T-cell (primary cell): ENCODE measurements at regions of chr2 and their contacts with region 1.

Region 1: GRCh38 chr2:165844216-165844615 is 50.2 kb upstream of the GALNT3 start:
- DNase-seq: no peak
- ATAC-seq: no peak
- H3K4me3 ChIP-seq: no peak overlapping the region
- H3K4me3 Mint-ChIP-seq: no peak overlapping the region
- H3K27ac ChIP-seq: no peak overlapping the region
- H3K27ac Mint-ChIP-seq: no peak overlapping the region
- H3K4me1 ChIP-seq: no peaks in the 10 kb centered on the region
- H3K4me1 Mint-ChIP-seq: no peaks in the 10 kb centered on the region
- H3K27me3 ChIP-seq: no peaks in the 10 kb centered on the region
- H3K27me3 Mint-ChIP-seq: no peaks in the 10 kb centered on the region

Region 2: GRCh38 chr2:165803123-165803760 is 41.0 kb before region 1 on chr2:
- CTCF ChIA-PET with region 1: interaction called in 1 of 2 experiments, 10 read pairs
- POLR2A ChIA-PET with region 1: no interaction called
- DNase-seq: no peak
- ATAC-seq: no peak
- H3K4me3 ChIP-seq: no peak overlapping the region
- H3K4me3 Mint-ChIP-seq: no peak overlapping the region
- H3K27ac ChIP-seq: no peak overlapping the region
- H3K27ac Mint-ChIP-seq: no peak overlapping the region
- H3K4me1 ChIP-seq: no peaks in the 10 kb centered on the region
- H3K4me1 Mint-ChIP-seq: no peaks in the 10 kb centered on the region
- H3K27me3 ChIP-seq: no peaks in the 10 kb centered on the region
- H3K27me3 Mint-ChIP-seq: peaks cover 3 to 4% of the 10 kb centered on the region in 2 donors

Region 3: GRCh38 chr2:165833158-165833557 is 11.1 kb before region 1 on chr2:
- CTCF ChIA-PET with region 1: no interaction called
- POLR2A ChIA-PET with region 1: no interaction called
- DNase-seq: no peak
- ATAC-seq: no peak
- H3K4me3 ChIP-seq: no peak overlapping the region
- H3K4me3 Mint-ChIP-seq: no peak overlapping the region
- H3K27ac ChIP-seq: no peak overlapping the region
- H3K27ac Mint-ChIP-seq: no peak overlapping the region
- H3K4me1 ChIP-seq: no peaks in the 10 kb centered on the region
- H3K4me1 Mint-ChIP-seq: no peaks in the 10 kb centered on the region
- H3K27me3 ChIP-seq: peaks cover 0 to 2% of the 10 kb centered on the region in 2 experiments
- H3K27me3 Mint-ChIP-seq: no peaks in the 10 kb centered on the region